ENCODE measurements at regions of chr1 and their contacts with region 1.

Region 1: DNA sequence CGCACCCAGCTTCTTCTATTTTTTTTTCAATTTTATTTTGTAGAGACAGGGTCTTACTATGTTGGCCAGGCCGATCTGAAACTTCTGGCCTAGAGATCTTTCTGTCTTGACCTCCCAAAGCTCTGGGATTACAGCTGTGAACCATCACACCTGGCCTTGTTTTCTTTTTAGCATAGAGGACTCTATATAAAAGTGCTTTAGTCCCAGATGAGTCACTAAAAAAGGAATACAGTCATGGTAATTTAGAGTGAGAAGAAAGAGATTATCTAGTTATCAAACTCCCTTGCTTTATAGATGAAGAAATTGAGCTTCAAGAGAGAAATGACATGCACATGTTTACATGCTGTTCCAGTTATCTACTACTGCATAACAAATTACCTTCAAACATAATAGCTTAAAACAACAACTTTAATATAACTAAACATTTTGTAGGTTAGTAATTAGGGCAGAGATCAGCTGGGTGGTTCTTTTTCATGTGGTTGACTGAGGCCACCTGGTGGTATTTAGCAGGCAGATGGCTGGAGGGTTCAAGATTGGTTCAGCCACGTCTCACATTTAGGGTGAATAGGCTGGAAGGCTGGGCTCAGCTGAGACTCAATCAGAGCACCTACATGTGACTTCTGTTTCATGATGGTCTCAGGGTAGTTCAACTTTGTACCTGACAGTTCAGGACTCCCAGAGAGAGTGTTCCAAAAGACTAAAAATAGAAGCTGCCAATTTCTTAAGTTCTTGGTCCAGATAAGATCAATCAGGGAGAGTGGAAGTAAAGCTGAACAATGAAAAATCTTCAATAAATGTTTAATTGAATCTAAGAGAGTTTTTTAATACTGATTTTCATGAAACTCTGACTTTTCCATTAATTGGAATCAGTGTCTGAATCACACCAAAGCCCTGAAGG is 16.9 kb upstream of the MTF2 start:
- DNase-seq: peak; percentile 16 to 66 (median 40)
- ATAC-seq: peak; percentile 99
- H3K4me3 ChIP-seq: no peak overlapping the region
- H3K27ac ChIP-seq: no peak overlapping the region
- H3K4me1 ChIP-seq: no peaks in the 10 kb centered on the region
- H3K27me3 ChIP-seq: no peaks in the 10 kb centered on the region; a peak in 1 of 5 replicates
- CTCF ChIP-seq: peak; percentile 77 to 91 (median 78)
- EP300 ChIP-seq: no peak
- POLR2A ChIP-seq: no peak
- RAD21 ChIP-seq: peak; percentile 96

Region 2: GRCh38 chr1:92851729-92852128 is 210.4 kb before region 1 on chr1:
- CTCF ChIA-PET with region 1: interaction called, 3 read pairs
- POLR2A ChIA-PET with region 1: no interaction called
- in situ Hi-C with region 1: loop called (anchors 5 kb)
- intact Hi-C with region 1: no loop called
- DNase-seq: peak in 1 of 4 experiments; percentile 38
- ATAC-seq: peak; percentile 50
- H3K4me3 ChIP-seq: peak overlapping the region; percentile 7
- H3K27ac ChIP-seq: no peak overlapping the region
- H3K4me1 ChIP-seq: peaks cover 14 to 19% of the 10 kb centered on the region in 2 experiments; a peak in 4 of 5 replicates
- H3K27me3 ChIP-seq: no peaks in the 10 kb centered on the region
- CTCF ChIP-seq: no peak
- EP300 ChIP-seq: no peak
- POLR2A ChIP-seq: no peak
- RAD21 ChIP-seq: no peak

Region 3: GRCh38 chr1:92858564-92859399 is 203.4 kb before region 1 on chr1:
- CTCF ChIA-PET with region 1: interaction called, 36 read pairs
- POLR2A ChIA-PET with region 1: no interaction called
- in situ Hi-C with region 1: loop called (anchors 5 kb)
- intact Hi-C with region 1: loop called (anchors 2 kb)
- DNase-seq: peak; percentile 72 to 83 (median 75)
- ATAC-seq: peak; percentile 85
- H3K4me3 ChIP-seq: no peak overlapping the region
- H3K27ac ChIP-seq: no peak overlapping the region
- H3K4me1 ChIP-seq: peaks cover 0 to 7% of the 10 kb centered on the region in 2 experiments; a peak in 1 of 5 replicates
- H3K27me3 ChIP-seq: no peaks in the 10 kb centered on the region
- CTCF ChIP-seq: peak; percentile 93 to 99 (median 98)
- EP300 ChIP-seq: no peak
- POLR2A ChIP-seq: no peak
- RAD21 ChIP-seq: peak; percentile 100

Region 4: GRCh38 chr1:93021539-93022134 is 40.5 kb before region 1 on chr1:
- CTCF ChIA-PET with region 1: interaction called, 51 read pairs
- POLR2A ChIA-PET with region 1: interaction called, 3 read pairs
- in situ Hi-C with region 1: loop called (anchors 5 kb)
- intact Hi-C with region 1: loop called (anchors 1 kb)
- DNase-seq: peak; percentile 62 to 67 (median 65)
- ATAC-seq: peak; percentile 86
- H3K4me3 ChIP-seq: no peak overlapping the region
- H3K27ac ChIP-seq: no peak overlapping the region
- H3K4me1 ChIP-seq: peaks cover 3 to 16% of the 10 kb centered on the region in 2 experiments; a peak in 4 of 5 replicates
- H3K27me3 ChIP-seq: no peaks in the 10 kb centered on the region
- CTCF ChIP-seq: peak; percentile 61 to 92 (median 80); a peak in 5 of 6 replicates
- EP300 ChIP-seq: no peak
- POLR2A ChIP-seq: no peak
- RAD21 ChIP-seq: peak; percentile 94 to 97

Region 5: DNA sequence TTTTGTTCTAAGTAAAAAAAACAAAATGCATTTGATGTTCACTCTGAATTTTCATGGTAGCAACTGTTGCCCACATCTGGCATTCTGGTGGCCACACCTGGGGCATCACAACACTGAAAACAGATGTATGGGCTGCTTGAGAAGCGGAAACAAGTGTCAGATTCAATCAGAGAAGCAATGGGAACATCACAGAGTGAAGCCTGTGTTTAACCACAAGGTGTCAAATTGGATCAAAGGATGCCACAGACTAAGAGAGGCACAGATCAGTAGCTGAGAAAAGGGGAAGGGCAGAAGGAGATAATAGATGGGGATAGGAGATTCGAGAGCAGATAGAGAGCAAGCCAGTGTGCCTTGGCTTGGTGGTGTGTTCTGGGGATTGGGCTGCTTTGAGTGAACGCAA is 32.8 kb before region 1 on chr1:
- CTCF ChIA-PET with region 1: interaction called, 3 read pairs
- POLR2A ChIA-PET with region 1: no interaction called
- in situ Hi-C with region 1: loop called (anchors 5 kb)
- intact Hi-C with region 1: no loop called
- DNase-seq: no peak
- ATAC-seq: no peak
- H3K4me3 ChIP-seq: no peak overlapping the region
- H3K27ac ChIP-seq: no peak overlapping the region
- H3K4me1 ChIP-seq: peaks cover 3 to 35% of the 10 kb centered on the region in 2 experiments
- H3K27me3 ChIP-seq: no peaks in the 10 kb centered on the region
- CTCF ChIP-seq: no peak
- EP300 ChIP-seq: no peak
- POLR2A ChIP-seq: no peak
- RAD21 ChIP-seq: no peak

Region 6: DNA sequence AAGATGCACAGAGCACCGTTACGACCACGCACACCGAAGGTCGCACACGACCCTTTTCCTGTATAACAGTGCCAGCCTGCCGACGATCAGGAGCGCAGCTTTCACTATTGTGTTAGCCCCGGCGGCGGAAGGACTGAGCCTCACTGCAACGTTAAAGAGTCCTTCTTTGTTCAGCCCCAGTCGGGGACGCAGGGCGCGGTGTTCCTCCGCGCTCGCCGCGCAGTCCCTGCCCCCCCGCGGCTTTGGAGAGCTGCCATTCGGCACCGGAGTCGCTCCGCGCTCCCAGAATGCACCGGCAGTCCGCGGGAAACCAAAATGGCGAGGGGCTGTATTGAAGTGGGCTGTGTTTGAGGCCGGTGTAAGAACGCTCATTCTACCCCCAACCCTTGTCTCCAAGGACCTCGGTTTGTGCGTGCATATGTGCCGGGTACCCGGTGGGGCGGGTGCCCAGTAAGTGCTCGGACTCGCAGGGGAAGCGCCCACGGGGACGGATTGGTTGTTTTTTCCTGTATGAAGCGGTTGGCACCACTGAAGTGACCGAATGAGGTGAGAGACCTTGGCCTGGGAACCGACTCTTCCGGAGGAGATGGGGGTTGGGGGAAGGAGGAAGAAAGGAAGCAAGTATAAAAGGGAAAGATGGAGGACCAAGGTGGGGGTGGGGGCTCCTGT is 17.0 kb after region 1 on chr1 and contains the start of gene MTF2:
- CTCF ChIA-PET with region 1: no interaction called
- POLR2A ChIA-PET with region 1: interaction called, 28 read pairs
- in situ Hi-C with region 1: no loop called
- intact Hi-C with region 1: no loop called
- DNase-seq: peak; percentile 89 to 98 (median 90)
- ATAC-seq: peak; percentile 90
- H3K4me3 ChIP-seq: peak within 1 kb of the TSS; percentile 92
- H3K27ac ChIP-seq: peak within 1 kb of the TSS; percentile 96
- H3K4me1 ChIP-seq: peaks cover 0 to 6% of the 10 kb centered on the region in 2 experiments; a peak in 3 of 5 replicates
- H3K27me3 ChIP-seq: no peaks in the 10 kb centered on the region
- CTCF ChIP-seq: no peak
- EP300 ChIP-seq: peak; percentile 66
- POLR2A ChIP-seq: peak; percentile 98
- RAD21 ChIP-seq: peak; percentile 7 to 12; a peak in 2 of 4 replicates
- polyA plus RNA-seq, gene MTF2: 29.3 to 35.7 TPM

Measured in K562 (cell line).